Right ventricle myocardium superior (tissue), 1 donor: ENCODE measurements at regions of chr9 and their contacts with region 1.

Region 1: GRCh38 chr9:129495534-129496325 is 125.2 kb downstream of the C9orf50 start:
- DNase-seq: peak; percentile 98
- ATAC-seq: peak; percentile 89

Region 2: DNA sequence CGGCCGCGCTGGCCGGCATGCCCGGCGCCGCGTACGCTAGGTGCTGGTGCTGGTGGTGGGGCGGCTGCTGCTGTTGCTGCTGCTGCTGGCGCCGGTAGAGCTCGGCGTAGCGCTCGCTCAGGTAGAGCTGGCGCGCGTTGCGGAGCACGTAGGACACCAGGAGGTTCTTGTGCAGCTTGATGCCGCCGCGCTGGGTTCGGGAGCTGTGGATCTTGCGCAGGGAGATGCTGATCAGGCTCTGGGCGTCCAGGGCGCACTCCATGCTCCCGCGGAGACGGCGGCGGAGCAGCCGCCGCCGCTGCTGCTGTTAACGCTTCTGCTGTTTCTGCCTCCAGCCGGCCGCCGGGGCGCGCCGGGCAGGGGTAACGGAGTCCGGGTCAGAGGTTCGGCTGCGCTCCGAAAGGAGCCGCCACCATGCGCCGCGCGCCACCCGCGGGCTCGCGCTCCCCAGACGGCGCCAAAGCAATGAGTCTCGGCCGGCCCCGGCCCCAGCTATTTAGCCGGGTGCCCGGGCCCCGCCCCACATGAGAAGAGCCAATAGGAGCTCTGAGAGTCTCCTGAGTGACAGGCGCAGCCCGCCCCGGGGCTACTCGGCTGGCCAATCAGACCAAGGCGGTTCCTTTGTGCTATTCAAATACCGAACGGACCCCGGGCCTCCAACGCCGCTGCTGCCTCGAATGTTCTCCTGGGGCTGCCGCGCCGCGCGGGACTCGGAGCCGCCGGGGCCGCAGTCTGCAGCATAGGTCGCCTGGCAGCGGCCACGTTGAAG is 317.8 kb before region 1 on chr9 and contains the start of gene IER5L:
- intact Hi-C with region 1: loop called (anchors 5 kb)
- DNase-seq: peak; percentile 97
- ATAC-seq: peak; percentile 83
- total RNA-seq, gene IER5L: 3.5 TPM

Region 3: GRCh38 chr9:129413537-129414376 is 82.0 kb before region 1 on chr9:
- intact Hi-C with region 1: loop called (anchors 5 kb)
- DNase-seq: peak; percentile 100
- ATAC-seq: peak; percentile 89

Region 4: GRCh38 chr9:129536041-129536440 is 40.3 kb after region 1 on chr9:
- intact Hi-C with region 1: loop called (anchors 5 kb)
- DNase-seq: no peak
- ATAC-seq: no peak

Region 5: GRCh38 chr9:129610473-129611301 is 115.0 kb after region 1 on chr9:
- intact Hi-C with region 1: loop called (anchors 5 kb)
- DNase-seq: peak; percentile 89
- ATAC-seq: peak; percentile 76

Region 6: DNA sequence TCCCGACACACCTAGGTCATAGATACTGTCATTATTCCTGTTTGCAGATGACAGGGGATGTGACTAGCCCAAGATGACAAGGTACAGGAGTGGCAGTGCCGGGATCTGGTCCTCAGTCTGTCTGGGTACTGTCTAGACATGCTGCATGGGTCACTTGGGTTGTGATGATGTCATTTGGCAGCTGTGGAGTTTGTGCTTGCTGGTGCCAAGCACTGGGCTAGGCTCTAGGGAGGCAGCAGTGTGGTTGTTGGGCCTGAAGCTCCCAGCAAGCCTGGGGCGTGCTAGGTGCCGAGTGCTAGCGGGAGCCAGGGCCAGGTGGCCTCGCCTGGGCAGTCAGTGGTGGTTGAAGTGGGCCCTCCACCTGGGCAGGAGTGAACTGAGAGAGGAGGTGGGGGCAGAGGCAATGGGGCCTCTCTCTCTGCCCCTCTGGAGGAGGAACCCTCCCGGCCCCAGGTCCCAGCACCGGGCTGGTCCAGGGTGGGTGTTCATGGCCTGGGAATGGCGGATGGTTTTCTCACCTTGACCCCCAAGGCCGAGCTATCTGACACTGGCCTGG is 155.0 kb after region 1 on chr9:
- intact Hi-C with region 1: no loop called
- DNase-seq: no peak
- ATAC-seq: no peak